Gastrocnemius medialis (tissue), 4 donors: ENCODE measurements at regions of chr18 and their contacts with region 1.

Region 1: DNA sequence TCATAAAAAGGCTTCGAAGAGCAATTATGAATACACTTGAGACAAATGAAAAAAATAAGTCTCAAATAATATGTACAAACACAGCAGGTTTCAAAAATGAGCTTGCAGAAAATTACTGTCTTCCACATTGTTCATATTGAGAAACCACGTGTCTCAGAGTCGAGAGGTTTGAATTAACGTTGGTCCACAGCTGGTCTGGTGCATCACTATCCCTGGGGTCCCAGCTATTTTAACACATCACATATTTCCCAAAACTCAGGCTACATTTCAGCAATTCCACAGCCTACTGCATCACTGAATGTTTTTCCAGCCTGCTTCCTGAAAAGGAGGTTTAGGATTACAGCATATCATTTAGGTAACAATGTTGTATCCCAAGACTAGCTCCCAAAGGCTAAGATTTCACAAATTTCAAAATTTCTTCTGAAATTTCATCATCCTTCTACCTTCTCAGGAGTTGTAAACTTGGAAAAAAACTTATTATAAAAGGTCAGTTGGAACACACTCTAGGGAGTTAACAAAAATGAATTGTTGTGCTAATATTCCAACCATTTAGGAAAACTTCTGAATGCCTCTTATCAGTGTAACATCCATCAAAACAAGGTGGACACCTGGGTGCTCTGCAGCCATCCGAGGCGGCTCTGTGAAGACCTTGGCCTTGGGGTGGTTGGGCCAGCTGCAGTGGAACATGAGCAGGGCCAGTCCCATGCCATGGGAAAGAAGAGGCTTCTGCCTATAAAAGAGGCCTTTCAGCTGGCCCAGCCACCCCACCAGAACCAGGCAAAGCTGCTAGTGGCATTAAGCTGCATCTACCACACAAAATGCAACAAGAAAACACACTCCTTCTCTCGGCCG is 198.1 kb upstream of the RBBP8 start:
- DNase-seq: peak in 1 of 2 donors; percentile 26
- ATAC-seq: peak; percentile 74 to 77
- H3K4me3 ChIP-seq: no peak overlapping the region
- H3K27ac ChIP-seq: no peak overlapping the region
- H3K4me1 ChIP-seq: no peaks in the 10 kb centered on the region
- H3K27me3 ChIP-seq: no peaks in the 10 kb centered on the region
- CTCF ChIP-seq: no peak
- POLR2A ChIP-seq: no peak

Region 2: DNA sequence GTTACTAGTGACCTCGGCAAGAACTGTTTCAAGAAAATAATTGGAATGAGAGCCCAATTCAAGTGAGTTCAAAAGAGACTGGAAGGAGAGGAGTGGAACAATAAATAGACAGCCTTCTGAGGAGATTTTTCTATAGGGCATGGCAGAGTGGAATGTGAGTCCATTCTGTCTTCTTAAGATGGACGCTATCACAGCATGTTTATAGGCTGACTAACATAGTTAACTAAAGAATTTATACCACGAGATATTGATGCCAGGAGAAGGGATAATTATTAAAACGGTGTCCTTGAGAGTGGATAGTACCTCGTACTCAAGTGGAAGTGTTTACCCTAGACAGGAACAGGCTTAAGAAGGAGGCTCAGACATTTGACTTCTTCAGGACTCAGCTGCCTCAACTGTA is 54.6 kb after region 1 on chr18:
- in situ Hi-C with region 1: no loop called
- intact Hi-C with region 1: no loop called
- DNase-seq: no peak
- ATAC-seq: no peak
- H3K4me3 ChIP-seq: no peak overlapping the region
- H3K27ac ChIP-seq: no peak overlapping the region
- H3K4me1 ChIP-seq: no peaks in the 10 kb centered on the region
- H3K27me3 ChIP-seq: no peaks in the 10 kb centered on the region
- CTCF ChIP-seq: no peak
- POLR2A ChIP-seq: no peak

Region 3: DNA sequence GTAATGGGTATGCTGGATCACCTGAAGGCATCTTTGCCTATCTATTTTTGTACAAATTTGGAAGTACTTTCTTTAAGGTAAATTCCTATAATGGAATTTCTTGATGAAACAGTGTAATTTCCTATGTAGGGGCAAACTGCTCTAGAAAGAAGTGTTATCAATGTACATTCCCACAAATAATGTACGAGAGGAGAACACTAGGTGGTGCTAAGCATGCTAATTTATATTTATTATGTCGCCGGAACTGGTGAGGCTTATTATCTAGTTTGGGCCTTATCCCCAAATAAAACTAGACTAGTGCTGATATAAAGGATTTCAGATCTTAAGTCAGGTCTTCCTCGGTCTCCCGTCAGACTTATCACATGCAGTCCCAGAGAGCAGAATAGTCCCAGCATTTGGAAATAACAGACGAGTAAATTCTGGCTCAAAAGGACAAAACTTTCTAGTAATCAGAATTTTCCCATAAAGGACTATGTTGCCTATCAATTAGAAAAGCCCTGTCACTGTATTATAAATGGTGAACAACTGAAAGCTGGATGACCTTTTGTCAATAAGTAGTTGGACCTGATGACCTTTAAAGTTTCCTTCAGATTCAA is 111.2 kb after region 1 on chr18:
- in situ Hi-C with region 1: loop called in 1 of 4 experiments (anchors 25 kb)
- intact Hi-C with region 1: no loop called
- DNase-seq: no peak
- ATAC-seq: no peak
- H3K4me3 ChIP-seq: no peak overlapping the region
- H3K27ac ChIP-seq: no peak overlapping the region
- H3K4me1 ChIP-seq: no peaks in the 10 kb centered on the region
- H3K27me3 ChIP-seq: no peaks in the 10 kb centered on the region
- CTCF ChIP-seq: no peak
- POLR2A ChIP-seq: no peak

Region 4: DNA sequence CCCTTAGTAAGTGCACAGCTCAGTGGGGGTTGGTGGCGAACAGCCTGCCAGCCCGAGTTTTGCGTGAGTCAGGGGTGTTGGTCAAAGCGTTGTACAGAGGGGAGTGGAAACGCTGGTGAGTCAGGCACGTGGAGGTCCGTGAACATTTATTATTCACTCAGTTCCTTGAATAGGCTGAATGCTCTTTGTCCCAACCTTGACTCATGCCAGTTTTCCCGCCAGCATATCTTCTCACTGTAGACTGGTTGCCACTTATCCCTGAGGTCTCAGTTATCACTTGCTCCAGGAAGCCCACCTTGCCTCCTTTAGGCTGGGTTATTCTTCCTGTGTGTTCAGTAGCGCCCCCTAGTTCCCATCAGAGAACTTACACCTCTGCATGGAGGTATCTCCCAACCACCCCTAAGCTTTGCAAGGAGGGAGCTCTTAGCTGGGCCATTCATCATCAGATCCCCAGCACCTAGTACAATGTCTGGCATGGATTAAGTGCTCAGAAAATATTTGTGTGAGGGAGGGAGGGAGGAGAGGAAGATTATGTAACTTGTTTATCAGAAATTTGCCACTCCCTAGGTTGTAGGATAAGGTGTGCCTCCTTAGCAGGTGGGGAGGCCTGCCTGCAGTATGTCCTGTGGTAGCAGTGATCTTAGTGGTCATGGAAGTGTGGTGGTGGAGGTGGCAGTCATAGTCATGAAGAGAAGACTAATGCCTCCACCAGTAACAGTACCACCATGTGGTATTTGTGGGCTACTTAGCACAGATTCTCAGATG is 472.4 kb after region 1 on chr18:
- in situ Hi-C with region 1: no loop called
- intact Hi-C with region 1: no loop called
- DNase-seq: no peak
- ATAC-seq: no peak
- H3K4me3 ChIP-seq: no peak overlapping the region
- H3K27ac ChIP-seq: no peak overlapping the region
- H3K4me1 ChIP-seq: peaks cover 0 to 11% of the 10 kb centered on the region in 2 donors
- H3K27me3 ChIP-seq: no peaks in the 10 kb centered on the region
- CTCF ChIP-seq: no peak
- POLR2A ChIP-seq: no peak